ENCODE measurements at regions of chr19 and their contacts with region 1.

Region 1: DNA sequence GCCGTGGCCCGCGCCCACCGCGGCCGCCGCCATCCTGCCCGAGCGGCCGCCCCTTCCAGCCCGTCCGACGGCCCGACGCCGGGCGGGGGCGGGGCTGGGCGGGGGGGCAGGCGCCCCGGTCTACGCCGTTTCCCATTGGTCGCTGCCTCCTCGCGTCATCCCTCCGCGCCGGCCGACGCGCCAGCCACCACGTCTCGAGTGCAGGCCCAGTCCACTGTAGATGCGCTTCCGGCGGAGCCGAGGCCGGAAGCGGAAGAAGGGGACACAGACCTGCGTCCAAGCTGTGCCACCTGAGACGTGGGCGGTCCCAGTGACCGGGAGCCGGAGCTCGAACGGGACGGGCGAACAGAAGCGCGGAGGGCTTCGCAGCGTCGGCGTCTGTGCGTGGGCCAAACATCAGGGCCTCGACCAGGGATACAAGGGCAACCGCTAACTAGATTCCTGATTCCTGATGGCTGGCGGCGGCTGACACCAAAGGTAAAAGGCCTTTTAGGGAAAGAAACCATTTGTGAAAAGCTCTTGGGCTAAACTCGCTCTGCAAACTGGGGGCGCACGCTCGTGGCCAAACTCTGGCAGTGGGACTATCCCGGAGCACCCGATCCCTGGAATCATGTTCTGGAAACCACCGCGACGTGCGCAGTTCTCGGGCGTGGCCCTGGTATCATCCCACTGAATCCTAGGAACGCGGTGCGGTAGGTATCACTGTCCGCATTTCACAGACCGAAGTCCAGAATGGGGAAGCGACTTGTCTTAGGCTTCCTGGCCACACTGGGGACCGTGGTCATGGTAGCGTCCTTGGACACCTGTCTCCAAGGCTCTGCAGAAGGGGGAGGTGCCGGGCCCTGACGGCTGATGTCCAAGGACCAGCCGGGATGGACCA is at the start of gene SLC35E1:
- DNase-seq: peak; percentile 69
- H3K4me3 ChIP-seq: peak within 1 kb of the TSS; percentile 98
- CTCF ChIP-seq: no peak

Region 2: GRCh38 chr19:16584248-16585141 is 11.9 kb after region 1 on chr19:
- CTCF ChIA-PET with region 1: interaction called, 4 read pairs
- POLR2A ChIA-PET with region 1: interaction called, 13 read pairs
- DNase-seq: no peak
- H3K4me3 ChIP-seq: peak overlapping the region; percentile 38
- CTCF ChIP-seq: no peak